ENCODE measurements at regions of chr3 and their contacts with region 1.

Region 1: GRCh38 chr3:141370065-141370533 is 1.8 kb downstream of the ZBTB38 start:
- DNase-seq: peak; percentile 77
- CTCF ChIP-seq: peak; percentile 50

Region 2: DNA sequence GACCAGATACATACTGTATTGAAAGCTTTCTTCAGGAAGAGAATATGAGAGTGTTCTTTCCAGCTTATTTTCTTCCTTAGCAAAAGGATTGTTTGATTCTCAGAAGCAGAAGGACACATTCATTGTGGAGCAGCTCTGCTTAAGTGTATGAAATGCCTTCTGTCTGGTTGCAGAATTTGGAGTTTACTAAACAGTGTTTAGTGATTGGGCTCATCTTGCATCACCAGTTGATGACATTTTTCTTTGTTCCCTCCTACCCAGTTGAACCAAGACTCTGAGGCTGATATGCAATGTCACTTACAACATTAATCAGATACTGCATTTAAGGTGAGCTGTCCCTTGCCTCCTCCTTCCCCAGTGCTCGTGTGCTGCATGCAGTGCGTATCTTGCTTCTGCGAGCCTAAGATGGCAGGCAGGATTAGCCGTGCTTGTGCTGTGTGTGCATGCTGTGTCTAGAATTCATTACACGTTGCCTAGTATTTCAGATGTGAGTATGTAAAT is 16.6 kb after region 1 on chr3:
- CTCF ChIA-PET with region 1: interaction called, 143 read pairs
- POLR2A ChIA-PET with region 1: interaction called, 3 read pairs
- DNase-seq: no peak
- CTCF ChIP-seq: no peak